ENCODE measurements at regions of chr12 and their contacts with region 1.

Region 1: GRCh38 chr12:110896559-110896958 is 23.8 kb downstream of the MYL2 start:
- DNase-seq: no peak
- ATAC-seq: no peak
- H3K4me3 ChIP-seq: no peak overlapping the region
- H3K27ac ChIP-seq: no peak overlapping the region
- H3K4me1 ChIP-seq: no peaks in the 10 kb centered on the region
- H3K27me3 ChIP-seq: no peaks in the 10 kb centered on the region; a peak in 1 of 4 replicates
- CTCF ChIP-seq: no peak
- EP300 ChIP-seq: no peak
- POLR2A ChIP-seq: no peak
- RAD21 ChIP-seq: no peak

Region 2: DNA sequence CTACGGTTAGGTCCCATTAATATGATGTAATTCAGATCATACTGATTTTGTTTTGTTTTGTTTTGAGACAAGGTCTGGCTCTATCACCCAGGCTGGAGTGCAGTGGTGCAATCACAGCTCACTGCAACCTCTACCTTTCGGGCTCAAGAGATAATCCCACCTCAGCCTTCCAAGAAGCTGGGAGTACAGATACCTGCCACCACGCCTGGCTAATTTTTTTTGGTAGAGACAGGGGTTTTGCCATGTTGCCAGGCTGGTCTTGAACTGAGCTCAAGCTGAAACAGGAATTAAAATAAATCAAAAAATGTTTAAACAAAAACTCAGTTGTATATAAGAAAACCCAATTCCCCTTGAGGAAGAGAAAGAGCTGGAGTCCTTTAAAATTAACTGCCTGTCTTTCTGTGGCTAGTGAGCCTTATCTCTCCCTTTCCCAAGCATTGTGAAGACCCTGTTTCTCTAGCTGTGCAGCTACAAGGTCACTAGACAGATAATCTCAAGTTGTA is 475.3 kb before region 1 on chr12:
- CTCF ChIA-PET with region 1: no interaction called
- POLR2A ChIA-PET with region 1: no interaction called
- RAD21 ChIA-PET with region 1: no interaction called
- SMC1A ChIA-PET with region 1: no interaction called
- in situ Hi-C with region 1: no loop called
- intact Hi-C with region 1: no loop called
- DNase-seq: no peak
- ATAC-seq: no peak
- H3K4me3 ChIP-seq: no peak overlapping the region
- H3K27ac ChIP-seq: no peak overlapping the region
- H3K4me1 ChIP-seq: no peaks in the 10 kb centered on the region
- H3K27me3 ChIP-seq: no peaks in the 10 kb centered on the region
- CTCF ChIP-seq: no peak
- EP300 ChIP-seq: no peak
- POLR2A ChIP-seq: no peak
- RAD21 ChIP-seq: no peak

Region 3: DNA sequence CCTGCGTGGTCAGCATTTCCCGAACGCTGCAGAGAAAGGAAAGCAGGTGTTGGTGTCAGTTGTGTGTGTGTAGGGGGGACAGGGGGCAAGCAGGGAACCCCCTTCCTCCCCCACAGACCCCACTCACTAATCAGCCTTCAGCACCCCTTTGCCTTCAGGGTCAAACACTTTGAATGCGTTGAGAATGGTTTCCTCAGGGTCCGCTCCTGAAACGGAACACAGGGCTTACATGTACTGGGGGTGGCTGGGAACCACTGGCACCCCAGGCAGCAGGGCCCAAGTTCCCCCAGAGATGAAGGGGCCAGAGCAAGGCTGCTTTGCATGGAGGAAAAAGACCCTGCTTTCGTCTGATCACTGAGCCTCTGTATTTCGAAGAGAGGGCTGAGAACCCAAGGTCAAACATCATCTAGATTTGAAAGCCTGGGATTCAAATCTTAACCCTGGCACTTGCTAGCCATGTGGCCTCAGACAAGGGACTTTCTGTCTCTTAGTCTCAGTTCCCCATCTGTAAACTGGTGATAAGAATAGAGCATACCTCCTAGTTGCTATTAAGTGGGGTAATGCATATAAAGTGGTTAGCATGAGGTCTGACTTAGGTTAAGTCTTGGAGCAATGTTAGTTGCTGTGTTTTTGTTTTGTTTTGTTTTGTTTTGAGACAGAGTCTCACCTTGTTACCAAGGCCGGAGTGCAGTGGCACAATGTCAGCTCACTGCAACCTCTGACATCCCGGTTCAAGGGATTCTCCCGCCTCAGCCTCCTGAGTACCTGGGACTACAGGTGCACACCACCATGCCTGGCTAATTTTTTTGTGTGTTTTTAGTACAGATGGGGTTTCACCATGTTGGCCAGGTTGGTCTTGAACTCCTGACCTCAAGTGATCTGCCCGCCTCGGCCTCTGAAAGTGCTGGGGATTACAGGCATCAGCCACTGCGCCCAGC is 16.8 kb after region 1 on chr12:
- CTCF ChIA-PET with region 1: interaction called, 30 read pairs
- POLR2A ChIA-PET with region 1: interaction called, 3 read pairs
- RAD21 ChIA-PET with region 1: interaction called, 5 read pairs
- SMC1A ChIA-PET with region 1: interaction called, 15 read pairs
- in situ Hi-C with region 1: no loop called
- intact Hi-C with region 1: no loop called
- DNase-seq: peak; percentile 95
- ATAC-seq: peak; percentile 98
- H3K4me3 ChIP-seq: peak overlapping the region; percentile 12; the same call in 1 of the 2 replicates
- H3K27ac ChIP-seq: peak overlapping the region; percentile 99
- H3K4me1 ChIP-seq: peaks cover 45% of the 10 kb centered on the region
- H3K27me3 ChIP-seq: no peaks in the 10 kb centered on the region
- CTCF ChIP-seq: no peak
- EP300 ChIP-seq: peak; percentile 91 to 96
- POLR2A ChIP-seq: peak; percentile 50; the same call in 1 of the 2 replicates
- RAD21 ChIP-seq: no peak

Region 4: DNA sequence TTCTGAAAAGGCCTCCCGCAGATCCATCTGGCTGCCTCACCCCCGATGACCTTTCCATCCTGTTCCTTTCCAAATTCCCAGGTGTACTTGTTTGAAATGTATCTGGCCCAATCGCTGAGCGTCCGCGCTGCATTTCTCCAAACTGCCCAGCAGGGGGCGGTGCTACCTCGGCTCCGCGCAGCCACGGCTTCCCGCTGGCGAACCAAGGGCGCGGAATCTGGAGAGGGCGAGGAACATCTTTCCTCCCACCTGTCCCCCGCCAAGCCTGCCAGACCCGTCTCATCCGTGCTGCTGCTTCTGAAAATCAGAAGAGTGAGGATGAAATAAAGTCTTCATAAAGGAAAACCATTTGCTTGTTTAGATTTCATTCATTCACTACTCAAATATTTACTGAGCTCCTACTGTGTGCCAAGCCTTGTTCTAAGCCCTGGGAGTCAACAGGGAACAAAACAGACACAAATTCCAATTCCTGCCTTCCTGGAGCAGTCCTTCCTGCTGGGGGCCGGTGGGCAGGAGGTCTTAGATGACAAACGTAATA is 40.6 kb after region 1 on chr12:
- CTCF ChIA-PET with region 1: interaction called, 80 read pairs
- POLR2A ChIA-PET with region 1: no interaction called
- RAD21 ChIA-PET with region 1: interaction called, 7 read pairs
- SMC1A ChIA-PET with region 1: interaction called, 7 read pairs
- in situ Hi-C with region 1: no loop called
- intact Hi-C with region 1: loop called (anchors 1 kb)
- DNase-seq: no peak
- ATAC-seq: peak; percentile 77
- H3K4me3 ChIP-seq: no peak overlapping the region
- H3K27ac ChIP-seq: no peak overlapping the region
- H3K4me1 ChIP-seq: peaks cover 3% of the 10 kb centered on the region; the same call in 1 of the 2 replicates
- H3K27me3 ChIP-seq: no peaks in the 10 kb centered on the region
- CTCF ChIP-seq: peak; percentile 92 to 95 (median 94)
- EP300 ChIP-seq: no peak
- POLR2A ChIP-seq: no peak
- RAD21 ChIP-seq: peak; percentile 89

Region 5: GRCh38 chr12:111046896-111047295 is 150.3 kb after region 1 on chr12:
- CTCF ChIA-PET with region 1: no interaction called
- POLR2A ChIA-PET with region 1: no interaction called
- RAD21 ChIA-PET with region 1: no interaction called
- SMC1A ChIA-PET with region 1: no interaction called
- in situ Hi-C with region 1: no loop called
- intact Hi-C with region 1: no loop called
- DNase-seq: no peak
- ATAC-seq: no peak
- H3K4me3 ChIP-seq: no peak overlapping the region
- H3K27ac ChIP-seq: no peak overlapping the region
- H3K4me1 ChIP-seq: no peaks in the 10 kb centered on the region
- H3K27me3 ChIP-seq: 0 out of 4 replicates have a peak, but pooled peaks cover 0 to 1% of the 10 kb centered on the region in 2 experiments
- CTCF ChIP-seq: no peak
- EP300 ChIP-seq: no peak
- POLR2A ChIP-seq: no peak
- RAD21 ChIP-seq: no peak

Region 6: DNA sequence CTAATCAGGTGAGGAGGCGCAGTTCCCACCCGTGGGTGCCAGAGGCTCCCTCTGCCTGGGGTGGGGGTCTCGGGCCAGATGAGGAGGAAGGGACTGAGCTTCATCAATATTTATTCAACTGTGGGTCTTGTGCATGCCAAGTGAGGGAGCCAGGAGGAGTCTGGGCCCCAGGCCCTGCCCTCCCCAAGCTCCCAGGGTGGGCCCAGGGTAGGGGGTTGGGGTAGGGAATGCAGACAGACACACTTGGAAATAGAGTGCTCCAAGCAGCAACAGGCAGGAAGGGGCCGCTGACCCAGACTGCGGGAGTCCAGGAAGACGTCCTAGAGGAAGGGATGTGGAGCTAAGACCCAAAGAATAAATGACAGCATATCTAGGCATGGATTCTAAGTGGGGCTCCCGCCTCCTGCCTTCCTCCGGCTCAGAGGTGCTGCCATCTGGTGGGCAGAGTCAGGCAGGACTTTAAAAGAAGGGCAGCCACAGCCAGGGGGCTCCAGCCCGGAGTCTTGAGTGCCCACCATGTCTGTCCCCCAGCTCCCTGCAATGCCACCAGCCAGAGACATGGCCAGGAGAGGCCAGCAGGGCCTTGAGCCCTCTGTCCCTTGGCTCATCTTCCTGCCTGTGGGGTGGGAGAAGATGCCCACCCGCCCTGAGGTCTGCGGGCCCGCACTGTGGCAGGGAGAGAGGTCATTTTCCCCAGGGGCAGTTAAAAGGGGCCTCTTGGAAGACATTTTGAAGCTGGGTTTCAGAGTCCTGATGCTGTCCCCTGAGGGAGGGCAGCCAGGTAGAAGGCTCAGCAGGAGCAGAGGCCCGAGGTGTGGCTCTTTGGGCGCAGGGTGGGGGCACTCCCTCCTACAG is 402.2 kb after region 1 on chr12:
- CTCF ChIA-PET with region 1: interaction called, 49 read pairs
- POLR2A ChIA-PET with region 1: no interaction called
- RAD21 ChIA-PET with region 1: interaction called, 14 read pairs
- SMC1A ChIA-PET with region 1: interaction called, 11 read pairs
- in situ Hi-C with region 1: no loop called
- intact Hi-C with region 1: loop called (anchors 1 kb)
- DNase-seq: no peak
- ATAC-seq: peak; percentile 92
- H3K4me3 ChIP-seq: no peak overlapping the region
- H3K27ac ChIP-seq: no peak overlapping the region
- H3K4me1 ChIP-seq: peaks cover 1% of the 10 kb centered on the region; the same call in 1 of the 2 replicates
- H3K27me3 ChIP-seq: no peaks in the 10 kb centered on the region
- CTCF ChIP-seq: peak; percentile 76 to 81 (median 80)
- EP300 ChIP-seq: no peak
- POLR2A ChIP-seq: no peak
- RAD21 ChIP-seq: peak; percentile 60